Caco-2 (cell line): ENCODE measurements at regions of chr13 and their contacts with region 1.

Region 1: GRCh38 chr13:20940083-20940880 is 37.7 kb upstream of the XPO4 start:
- DNase-seq: peak; percentile 70 to 72
- H3K4me3 ChIP-seq: no peak overlapping the region
- H3K4me3 Mint-ChIP-seq: peak overlapping the region; percentile 73
- H3K27ac Mint-ChIP-seq: peak overlapping the region; percentile 97
- H3K4me1 ChIP-seq: peaks cover 36% of the 10 kb centered on the region
- H3K4me1 Mint-ChIP-seq: peaks cover 46% of the 10 kb centered on the region
- H3K27me3 ChIP-seq: no peaks in the 10 kb centered on the region
- H3K27me3 Mint-ChIP-seq: no peaks in the 10 kb centered on the region
- CTCF ChIP-seq: no peak

Region 2: DNA sequence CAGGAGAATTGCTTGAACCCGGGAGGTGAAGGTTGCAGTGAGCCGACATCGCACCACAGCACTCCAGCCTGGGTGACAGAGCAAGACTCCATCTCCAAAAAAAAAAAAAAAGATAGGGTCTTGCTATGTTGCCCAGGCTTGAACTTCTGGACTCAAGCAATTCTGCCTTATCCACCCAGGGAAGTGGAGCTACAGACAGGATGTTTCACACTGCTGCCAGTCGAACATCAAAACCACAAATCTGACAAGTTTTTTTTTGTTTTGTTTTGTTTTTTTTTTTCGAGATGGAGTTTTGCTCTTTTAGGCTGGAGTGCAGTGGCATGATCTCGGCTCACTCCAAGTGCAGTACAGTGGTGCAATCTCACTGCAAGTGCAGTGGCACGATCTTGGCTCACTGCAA is 48.5 kb before region 1 on chr13:
- CTCF ChIA-PET with region 1: no interaction called
- POLR2A ChIA-PET with region 1: no interaction called
- intact Hi-C with region 1: no loop called
- DNase-seq: no peak
- H3K4me3 ChIP-seq: no peak overlapping the region
- H3K4me3 Mint-ChIP-seq: no peak overlapping the region
- H3K27ac Mint-ChIP-seq: no peak overlapping the region
- H3K4me1 ChIP-seq: no peaks in the 10 kb centered on the region
- H3K4me1 Mint-ChIP-seq: no peaks in the 10 kb centered on the region
- H3K27me3 ChIP-seq: no peaks in the 10 kb centered on the region
- H3K27me3 Mint-ChIP-seq: no peaks in the 10 kb centered on the region
- CTCF ChIP-seq: no peak

Region 3: DNA sequence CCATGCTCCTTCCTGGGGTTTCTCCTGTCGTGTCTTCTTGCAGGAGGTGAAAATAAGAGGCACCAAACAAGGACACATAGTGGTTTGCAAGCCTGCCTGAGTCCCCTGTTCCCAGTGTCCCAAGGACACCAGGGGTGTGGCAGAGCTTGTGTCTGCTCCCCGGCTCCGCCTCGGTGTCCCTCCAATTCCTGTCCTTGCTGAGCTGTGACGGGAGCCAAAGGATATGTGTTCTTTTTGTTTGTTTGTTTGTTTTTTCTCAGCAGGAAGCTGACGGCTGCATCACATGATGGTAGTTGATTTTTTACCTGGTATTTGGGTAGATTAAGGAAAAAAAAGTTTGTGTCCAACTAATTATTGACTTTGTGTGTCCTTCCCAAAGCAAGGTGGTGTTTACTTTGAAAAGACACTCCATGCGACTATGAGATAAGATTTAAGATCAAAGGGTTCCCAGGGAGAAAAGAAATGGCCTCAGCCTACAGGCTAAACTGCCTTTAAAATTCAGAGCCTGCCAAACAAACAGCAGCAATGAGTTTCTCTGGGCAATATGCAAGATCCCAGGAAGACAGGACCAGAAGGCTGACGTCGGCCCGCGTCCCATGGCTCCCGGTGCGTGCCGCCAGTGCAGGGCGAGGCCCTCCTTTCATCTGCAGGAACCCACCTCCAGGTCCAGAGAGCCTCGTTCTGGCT is 13.1 kb after region 1 on chr13:
- CTCF ChIA-PET with region 1: interaction called, 3 read pairs
- POLR2A ChIA-PET with region 1: interaction called, 5 read pairs
- intact Hi-C with region 1: loop called (anchors 1 kb)
- DNase-seq: peak; percentile 64 to 68
- H3K4me3 ChIP-seq: no peak overlapping the region
- H3K4me3 Mint-ChIP-seq: peak overlapping the region; percentile 61
- H3K27ac Mint-ChIP-seq: peak overlapping the region; percentile 28
- H3K4me1 ChIP-seq: peaks cover 40% of the 10 kb centered on the region
- H3K4me1 Mint-ChIP-seq: peaks cover 41% of the 10 kb centered on the region
- H3K27me3 ChIP-seq: no peaks in the 10 kb centered on the region
- H3K27me3 Mint-ChIP-seq: no peaks in the 10 kb centered on the region
- CTCF ChIP-seq: no peak

Region 4: DNA sequence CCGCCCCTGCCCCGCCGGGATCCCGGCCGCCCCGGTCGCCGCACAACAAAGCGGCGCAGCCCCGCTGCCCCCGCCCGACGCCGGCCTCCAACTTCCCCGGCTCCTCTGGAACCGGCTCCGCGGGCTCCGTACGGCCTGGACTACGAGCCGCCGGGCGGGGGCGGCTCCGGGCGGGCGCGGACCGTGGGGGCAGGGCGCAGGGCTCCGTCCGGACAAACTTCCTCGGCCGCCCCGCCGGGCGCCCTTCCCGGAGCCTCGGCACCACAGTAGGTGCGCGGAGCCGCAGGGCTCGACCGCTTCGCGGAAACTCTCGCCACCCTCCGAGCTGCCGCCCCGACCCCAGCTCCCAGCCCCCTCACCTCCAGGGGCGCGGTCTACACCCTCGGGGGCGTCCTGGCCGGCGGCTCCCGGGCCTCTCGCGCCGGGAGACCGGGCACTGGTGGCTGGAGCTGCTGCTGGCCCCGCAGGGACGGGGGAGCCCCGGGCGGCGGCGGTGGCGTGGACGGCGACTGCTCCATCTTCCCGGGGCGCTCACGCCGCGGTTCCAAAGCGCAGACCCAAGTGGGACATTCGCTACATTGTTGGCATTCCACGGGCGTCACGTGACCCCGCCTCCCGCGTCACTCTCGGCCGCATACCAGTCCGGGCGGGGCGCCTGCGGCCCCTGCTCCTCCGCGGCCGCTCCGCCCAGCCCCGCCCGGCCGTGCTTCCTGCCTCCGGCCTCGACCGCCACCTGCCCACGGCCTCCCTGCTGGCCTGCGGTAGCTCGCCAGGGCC is 120.9 kb after region 1 on chr13 and contains the start of gene LATS2:
- CTCF ChIA-PET with region 1: no interaction called
- POLR2A ChIA-PET with region 1: interaction called, 6 read pairs
- intact Hi-C with region 1: loop called (anchors 1 kb)
- DNase-seq: peak; percentile 98 to 99
- H3K4me3 ChIP-seq: peak within 1 kb of the TSS; percentile 99
- H3K4me3 Mint-ChIP-seq: peak within 1 kb of the TSS; percentile 79
- H3K27ac Mint-ChIP-seq: peak within 1 kb of the TSS; percentile 91
- H3K4me1 ChIP-seq: peaks cover 23% of the 10 kb centered on the region
- H3K4me1 Mint-ChIP-seq: peaks cover 24% of the 10 kb centered on the region
- H3K27me3 ChIP-seq: no peaks in the 10 kb centered on the region
- H3K27me3 Mint-ChIP-seq: no peaks in the 10 kb centered on the region
- CTCF ChIP-seq: peak in 1 of 2 experiments; percentile 36
- total RNA-seq, gene LATS2: 41.9 and 45.6 TPM in 2 replicates

Region 5: GRCh38 chr13:21134475-21134874 is 194.2 kb after region 1 on chr13:
- CTCF ChIA-PET with region 1: no interaction called
- POLR2A ChIA-PET with region 1: interaction called, 3 read pairs
- intact Hi-C with region 1: loop called (anchors 1 kb)
- DNase-seq: no peak
- H3K4me3 ChIP-seq: no peak overlapping the region
- H3K4me3 Mint-ChIP-seq: no peak overlapping the region
- H3K27ac Mint-ChIP-seq: no peak overlapping the region
- H3K4me1 ChIP-seq: peaks cover 3% of the 10 kb centered on the region; the same call in 1 of the 2 replicates
- H3K4me1 Mint-ChIP-seq: peaks cover 13% of the 10 kb centered on the region
- H3K27me3 ChIP-seq: no peaks in the 10 kb centered on the region
- H3K27me3 Mint-ChIP-seq: no peaks in the 10 kb centered on the region
- CTCF ChIP-seq: no peak

Region 6: DNA sequence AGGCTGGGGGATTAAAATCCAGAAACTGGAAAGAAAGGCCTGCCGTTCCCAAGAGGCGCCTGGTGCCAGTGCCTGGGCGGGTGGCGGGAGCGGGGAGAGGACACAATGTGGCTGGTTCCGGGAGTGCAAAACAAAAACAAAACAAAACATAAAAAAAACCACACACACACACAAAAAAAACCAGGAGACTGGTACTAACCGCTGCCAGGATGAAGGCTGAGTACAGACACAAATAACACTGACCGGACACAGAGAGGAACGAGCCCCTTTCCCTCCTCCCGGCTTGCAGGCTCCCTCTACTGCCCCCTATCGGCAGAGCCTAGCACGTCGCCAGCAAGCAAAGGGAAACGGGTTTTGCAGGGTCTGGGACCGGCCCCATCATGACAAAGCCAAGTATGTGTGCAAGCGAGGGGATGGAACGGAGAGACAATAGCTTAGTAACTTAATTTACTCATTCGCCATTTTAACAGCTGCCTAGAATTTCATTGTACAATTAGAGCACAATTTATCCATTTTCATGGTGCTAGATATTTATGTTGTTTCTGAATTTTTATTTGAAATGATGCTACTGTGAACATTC is 536.7 kb after region 1 on chr13:
- CTCF ChIA-PET with region 1: no interaction called
- POLR2A ChIA-PET with region 1: no interaction called
- intact Hi-C with region 1: loop called (anchors 2 kb)
- DNase-seq: peak; percentile 81 to 85
- H3K4me3 ChIP-seq: no peak overlapping the region
- H3K4me3 Mint-ChIP-seq: no peak overlapping the region
- H3K27ac Mint-ChIP-seq: peak overlapping the region; percentile 68
- H3K4me1 ChIP-seq: peaks cover 11% of the 10 kb centered on the region; the same call in 1 of the 2 replicates
- H3K4me1 Mint-ChIP-seq: peaks cover 14% of the 10 kb centered on the region
- H3K27me3 ChIP-seq: no peaks in the 10 kb centered on the region
- H3K27me3 Mint-ChIP-seq: no peaks in the 10 kb centered on the region
- CTCF ChIP-seq: peak; percentile 87 to 95